WTC11 (cell line): ENCODE measurements at regions of chr17 and their contacts with region 1.

Region 1: GRCh38 chr17:76467366-76467765 is at the start of gene AANAT:
- DNase-seq: no peak
- ATAC-seq: no peak; the same call in 1 of the 2 replicates
- H3K4me3 Mint-ChIP-seq: no peak within 1 kb of the TSS
- H3K27ac Mint-ChIP-seq: no peak within 1 kb of the TSS
- H3K4me1 Mint-ChIP-seq: peaks cover 8% of the 10 kb centered on the region
- H3K27me3 Mint-ChIP-seq: no peaks in the 10 kb centered on the region; the same call in 1 of the 2 replicates
- CTCF ChIP-seq: no peak
- total RNA-seq, gene AANAT: 0.17 to 0.57 TPM in 2 of 3 replicates, not detected in the other

Region 2: DNA sequence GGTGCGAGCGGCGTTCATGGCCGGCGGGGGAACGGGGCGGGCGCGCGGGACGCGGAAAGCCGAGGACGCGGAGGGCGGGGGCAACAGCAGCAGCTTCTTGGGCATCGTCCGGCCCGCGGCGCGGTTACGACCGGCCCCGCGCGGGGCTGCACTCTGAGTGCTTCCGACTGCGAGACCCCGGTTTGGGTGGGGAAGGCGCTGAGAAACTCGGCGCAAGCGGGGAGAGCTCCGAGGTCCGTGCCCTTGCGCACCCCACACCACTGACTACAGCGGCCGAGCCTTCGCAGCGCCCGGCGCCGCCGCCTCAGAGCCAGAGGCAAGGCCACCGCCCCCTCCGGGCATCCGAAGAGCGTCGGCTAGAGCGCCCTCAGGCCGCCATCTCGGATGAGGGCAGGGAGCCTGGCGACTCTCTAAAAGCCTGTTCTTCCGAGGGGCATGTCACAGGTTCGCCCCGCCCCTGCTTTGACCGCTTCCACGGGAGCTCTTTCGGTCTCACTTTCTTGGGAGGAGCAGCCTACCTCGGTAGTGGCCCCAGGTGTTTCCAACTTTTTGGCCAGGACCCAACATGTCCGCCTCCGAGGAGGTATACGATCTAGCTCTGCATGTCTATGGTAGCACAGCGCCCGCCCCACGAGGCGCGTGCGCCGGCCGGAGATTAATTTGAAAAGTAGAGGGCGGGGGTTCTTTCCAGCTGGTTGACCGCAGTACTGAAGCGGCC is 113.6 kb before region 1 on chr17 and contains the start of gene PRPSAP1:
- CTCF ChIA-PET with region 1: no interaction called
- POLR2A ChIA-PET with region 1: no interaction called
- DNase-seq: peak; percentile 86
- ATAC-seq: peak; percentile 94
- H3K4me3 Mint-ChIP-seq: peak within 1 kb of the TSS; percentile 95
- H3K27ac Mint-ChIP-seq: peak within 1 kb of the TSS; percentile 100
- H3K4me1 Mint-ChIP-seq: peaks cover 27% of the 10 kb centered on the region
- H3K27me3 Mint-ChIP-seq: no peaks in the 10 kb centered on the region
- CTCF ChIP-seq: no peak
- total RNA-seq, gene PRPSAP1: 50.0 to 56.5 TPM (median 52.3 TPM) in 3 replicates

Region 3: DNA sequence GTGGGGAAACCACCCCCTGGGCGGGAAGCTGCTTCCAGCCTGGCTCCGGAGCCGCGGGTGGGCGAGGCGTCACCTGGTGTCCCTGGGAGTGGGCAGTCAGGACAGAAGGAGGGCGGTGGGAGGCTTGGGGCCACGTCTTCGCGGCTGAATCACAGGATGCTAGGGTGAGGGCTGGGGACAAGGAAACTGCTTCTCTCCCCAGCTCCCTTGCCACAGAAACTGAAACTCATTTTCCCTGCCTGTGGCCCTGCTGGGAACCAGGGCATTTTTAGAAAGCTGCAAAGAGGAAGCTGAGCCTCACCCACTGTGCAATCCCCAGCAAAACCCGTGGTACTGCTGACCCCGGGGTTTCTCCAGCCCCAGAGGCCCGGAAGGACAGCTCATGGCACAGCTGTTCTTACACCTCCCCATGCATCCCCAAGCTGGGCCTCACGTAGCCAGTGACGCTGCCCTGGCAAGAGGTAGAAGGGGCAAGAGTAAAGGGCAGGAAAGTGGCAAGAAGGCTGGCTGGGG is 25.7 kb after region 1 on chr17:
- CTCF ChIA-PET with region 1: interaction called, 11 read pairs
- POLR2A ChIA-PET with region 1: no interaction called
- DNase-seq: no peak
- ATAC-seq: no peak; the same call in 1 of the 2 replicates
- H3K4me3 Mint-ChIP-seq: no peak overlapping the region
- H3K27ac Mint-ChIP-seq: peak overlapping the region; percentile 78; the same call in 1 of the 2 replicates
- H3K4me1 Mint-ChIP-seq: peaks cover 25% of the 10 kb centered on the region
- H3K27me3 Mint-ChIP-seq: no peaks in the 10 kb centered on the region
- CTCF ChIP-seq: no peak

Region 4: DNA sequence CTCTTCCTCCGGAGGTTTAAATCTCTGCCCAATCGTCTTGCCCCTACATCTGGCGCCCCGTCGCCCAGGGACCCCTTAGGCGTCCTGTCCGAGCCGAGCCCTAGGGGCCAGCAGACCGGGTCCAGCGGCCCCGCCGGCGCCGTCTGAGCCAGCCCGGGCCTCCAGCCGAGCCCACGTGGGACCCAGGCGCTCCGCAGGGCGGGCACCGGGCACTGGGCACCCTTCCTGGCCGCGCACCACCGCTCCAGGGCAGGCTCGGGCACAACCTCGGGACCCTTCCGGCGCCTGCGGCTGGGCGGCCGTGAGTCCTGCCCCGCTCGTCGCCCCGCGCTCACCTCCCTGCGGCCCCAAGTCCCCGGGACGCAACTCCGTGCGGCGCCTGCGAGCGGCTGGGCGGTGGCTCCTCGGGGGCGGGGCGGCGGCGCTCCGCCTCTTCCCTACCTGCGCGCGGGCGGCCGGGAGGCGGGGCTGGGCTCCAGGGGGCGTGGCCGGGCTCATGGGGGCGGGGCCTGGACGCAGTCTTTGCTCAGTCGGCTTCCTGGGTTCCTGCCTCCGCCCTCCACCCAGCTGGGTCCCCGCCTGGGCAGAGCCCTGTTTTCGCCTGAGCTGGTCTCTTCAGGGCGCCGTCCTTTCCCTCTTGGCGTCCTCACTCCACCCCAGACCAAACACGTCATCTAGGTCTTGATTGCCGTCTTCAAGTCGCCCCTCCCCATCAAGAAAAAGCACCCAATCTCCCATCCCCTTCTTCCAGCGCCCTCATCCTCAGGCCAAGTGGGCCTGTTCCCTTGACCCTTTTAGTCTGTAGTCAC is 33.9 kb after region 1 on chr17 and contains the start of gene RHBDF2:
- CTCF ChIA-PET with region 1: interaction called, 33 read pairs
- POLR2A ChIA-PET with region 1: no interaction called
- DNase-seq: peak; percentile 95
- ATAC-seq: peak; percentile 82
- H3K4me3 Mint-ChIP-seq: peak within 1 kb of the TSS; percentile 82
- H3K27ac Mint-ChIP-seq: peak within 1 kb of the TSS; percentile 62
- H3K4me1 Mint-ChIP-seq: peaks cover 48% of the 10 kb centered on the region
- H3K27me3 Mint-ChIP-seq: peaks cover 5% of the 10 kb centered on the region
- CTCF ChIP-seq: no peak
- total RNA-seq, gene RHBDF2: 28.6 to 33.0 TPM (median 31.5 TPM) in 3 replicates

Region 5: GRCh38 chr17:76506408-76507349 is 39.3 kb after region 1 on chr17:
- CTCF ChIA-PET with region 1: interaction called, 33 read pairs
- POLR2A ChIA-PET with region 1: no interaction called
- DNase-seq: peak; percentile 94
- ATAC-seq: peak; percentile 80
- H3K4me3 Mint-ChIP-seq: peak overlapping the region; percentile 25
- H3K27ac Mint-ChIP-seq: no peak overlapping the region
- H3K4me1 Mint-ChIP-seq: peaks cover 12% of the 10 kb centered on the region
- H3K27me3 Mint-ChIP-seq: peaks cover 21% of the 10 kb centered on the region
- CTCF ChIP-seq: peak; percentile 92

Region 6: DNA sequence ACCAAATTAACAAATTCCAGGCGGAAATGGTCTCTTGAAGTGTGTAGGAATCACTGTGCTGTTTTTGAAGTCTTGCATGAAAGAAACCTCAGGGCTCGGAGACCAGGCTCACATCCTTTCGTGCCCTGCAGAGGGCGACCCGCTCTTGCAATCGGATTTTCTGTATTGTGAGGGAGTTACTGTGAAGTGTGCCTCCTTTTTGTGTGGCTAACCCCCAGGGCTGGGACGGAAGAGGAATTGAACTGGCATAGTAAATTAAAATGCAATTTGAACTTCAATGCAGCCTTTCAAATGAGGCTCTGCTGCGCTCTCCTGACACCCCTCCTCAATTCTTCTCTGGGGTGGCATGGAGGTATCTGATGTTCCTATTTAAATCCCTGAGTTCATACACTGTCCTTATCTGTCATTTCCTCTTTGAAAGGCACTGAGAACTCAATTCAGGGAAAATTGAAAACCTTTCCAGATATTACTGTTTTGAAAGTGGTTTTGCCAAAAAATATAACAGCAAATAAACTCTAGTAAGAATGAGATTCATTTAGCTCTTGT is 349.3 kb after region 1 on chr17:
- CTCF ChIA-PET with region 1: no interaction called
- POLR2A ChIA-PET with region 1: no interaction called
- DNase-seq: peak; percentile 75
- ATAC-seq: peak; percentile 93
- H3K4me3 Mint-ChIP-seq: no peak overlapping the region
- H3K27ac Mint-ChIP-seq: no peak overlapping the region
- H3K4me1 Mint-ChIP-seq: peaks cover 16% of the 10 kb centered on the region
- H3K27me3 Mint-ChIP-seq: no peaks in the 10 kb centered on the region
- CTCF ChIP-seq: peak; percentile 32; the same call in 1 of the 2 replicates